WTC11 (cell line): ENCODE measurements at regions of chr20 and their contacts with region 1.

Region 1: GRCh38 chr20:45293041-45294002 is 13.3 kb upstream of the RBPJL start:
- DNase-seq: peak; percentile 95
- ATAC-seq: peak; percentile 87
- H3K4me3 Mint-ChIP-seq: peak overlapping the region; percentile 71
- H3K27ac Mint-ChIP-seq: no peak overlapping the region
- H3K4me1 Mint-ChIP-seq: peaks cover 7% of the 10 kb centered on the region; the same call in 1 of the 2 replicates
- H3K27me3 Mint-ChIP-seq: peaks cover 66% of the 10 kb centered on the region
- CTCF ChIP-seq: peak; percentile 95

Region 2: DNA sequence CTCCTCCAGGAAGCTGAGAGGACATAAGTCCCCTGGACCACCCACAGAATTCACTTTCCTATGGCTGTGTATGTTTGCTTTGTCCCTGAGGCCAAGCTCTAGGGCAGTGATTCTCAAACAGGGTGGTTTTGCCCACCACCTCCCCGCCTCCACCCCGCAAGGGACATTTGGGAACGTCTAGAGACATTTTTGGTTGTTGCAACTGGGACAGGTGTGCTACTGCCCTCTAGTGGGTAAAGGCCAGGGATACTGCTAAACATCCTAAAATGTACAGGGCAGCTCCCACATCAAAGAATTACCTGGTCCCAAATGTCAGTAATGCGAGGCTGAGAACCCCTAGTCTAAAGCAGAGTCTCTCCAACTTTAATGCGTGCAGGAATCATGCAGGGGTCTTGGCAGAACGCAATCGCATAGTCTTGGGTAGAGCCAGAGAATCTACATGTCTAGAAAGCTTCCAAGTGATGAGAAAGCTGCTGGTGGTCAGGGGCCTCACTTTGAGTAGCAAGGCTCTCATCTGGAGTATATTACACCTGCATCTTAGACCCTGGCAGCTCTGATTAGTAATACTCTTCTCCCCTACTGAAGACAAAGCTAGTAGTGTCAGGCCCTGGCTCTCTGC is 197.5 kb before region 1 on chr20:
- CTCF ChIA-PET with region 1: interaction called, 18 read pairs
- POLR2A ChIA-PET with region 1: no interaction called
- DNase-seq: peak; percentile 70
- ATAC-seq: peak; percentile 50
- H3K4me3 Mint-ChIP-seq: no peak overlapping the region
- H3K27ac Mint-ChIP-seq: no peak overlapping the region
- H3K4me1 Mint-ChIP-seq: peaks cover 12% of the 10 kb centered on the region
- H3K27me3 Mint-ChIP-seq: peaks cover 48% of the 10 kb centered on the region
- CTCF ChIP-seq: peak; percentile 66; the same call in 1 of the 2 replicates

Region 3: DNA sequence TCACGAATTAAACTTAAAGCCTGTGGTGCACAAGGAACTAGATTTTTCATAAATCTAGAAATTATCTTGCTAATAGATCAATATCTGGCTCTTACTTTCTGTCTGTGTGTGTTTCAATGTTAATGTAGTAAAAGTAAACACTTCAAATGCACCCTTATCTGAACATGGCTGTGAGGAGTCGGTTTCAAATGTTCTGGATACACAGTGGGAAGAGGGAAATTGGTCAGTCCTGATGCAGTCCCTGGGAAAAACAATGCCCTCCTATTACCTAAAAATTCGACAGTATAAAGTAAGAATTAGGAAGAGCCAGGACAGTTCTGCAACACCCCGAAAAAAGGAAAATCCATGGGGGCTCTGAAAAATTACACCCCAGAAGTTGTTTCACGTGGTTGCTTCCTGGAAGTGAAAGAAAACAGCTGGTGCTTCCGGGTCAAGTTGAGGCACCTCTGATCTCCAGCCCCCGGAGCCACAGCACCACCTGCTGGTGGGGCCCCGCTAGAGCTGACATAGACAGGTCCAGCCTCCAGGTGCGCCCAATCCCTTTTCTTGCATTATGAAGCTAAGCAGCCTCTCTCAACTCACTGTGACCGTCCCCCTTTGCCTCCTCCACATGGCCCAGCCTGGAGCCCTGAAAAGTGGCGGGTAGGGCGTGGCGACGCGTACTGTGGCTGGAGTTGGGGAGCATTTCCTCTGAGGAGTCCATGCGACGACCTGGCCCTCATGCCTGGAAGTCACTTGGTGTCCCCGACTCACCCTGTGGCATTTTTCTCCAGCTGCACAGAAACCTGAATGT is 63.9 kb before region 1 on chr20:
- CTCF ChIA-PET with region 1: interaction called, 30 read pairs
- POLR2A ChIA-PET with region 1: no interaction called
- DNase-seq: peak; percentile 90
- ATAC-seq: peak; percentile 96
- H3K4me3 Mint-ChIP-seq: no peak overlapping the region
- H3K27ac Mint-ChIP-seq: no peak overlapping the region
- H3K4me1 Mint-ChIP-seq: no peaks in the 10 kb centered on the region
- H3K27me3 Mint-ChIP-seq: peaks cover 53% of the 10 kb centered on the region
- CTCF ChIP-seq: peak; percentile 85

Region 4: GRCh38 chr20:45306431-45306982 is 13.2 kb after region 1 on chr20 and contains the start of gene RBPJL:
- CTCF ChIA-PET with region 1: interaction called, 154 read pairs
- POLR2A ChIA-PET with region 1: interaction called, 4 read pairs
- DNase-seq: peak; percentile 79
- ATAC-seq: peak; percentile 8; the same call in 1 of the 2 replicates
- H3K4me3 Mint-ChIP-seq: 0 out of 2 replicates have a peak within 1 kb of the TSS, but pooled peaks have one; percentile 22
- H3K27ac Mint-ChIP-seq: no peak within 1 kb of the TSS
- H3K4me1 Mint-ChIP-seq: peaks cover 22% of the 10 kb centered on the region
- H3K27me3 Mint-ChIP-seq: peaks cover 30% of the 10 kb centered on the region
- CTCF ChIP-seq: peak; percentile 99
- total RNA-seq, gene RBPJL: 0.78 to 0.85 TPM (median 0.80 TPM) in 3 replicates

Region 5: GRCh38 chr20:45347936-45348778 is 54.8 kb after region 1 on chr20 and contains the start of gene SDC4:
- CTCF ChIA-PET with region 1: interaction called, 16 read pairs
- POLR2A ChIA-PET with region 1: no interaction called
- DNase-seq: peak; percentile 68
- ATAC-seq: peak; percentile 63
- H3K4me3 Mint-ChIP-seq: peak within 1 kb of the TSS; percentile 89
- H3K27ac Mint-ChIP-seq: peak within 1 kb of the TSS; percentile 19
- H3K4me1 Mint-ChIP-seq: peaks cover 45% of the 10 kb centered on the region
- H3K27me3 Mint-ChIP-seq: no peaks in the 10 kb centered on the region
- CTCF ChIP-seq: no peak
- total RNA-seq, gene SDC4: 64.0 to 69.6 TPM (median 69.5 TPM) in 3 replicates

Region 6: GRCh38 chr20:45450097-45450818 is 156.9 kb after region 1 on chr20:
- CTCF ChIA-PET with region 1: interaction called, 10 read pairs
- POLR2A ChIA-PET with region 1: no interaction called
- DNase-seq: no peak
- ATAC-seq: peak; percentile 59
- H3K4me3 Mint-ChIP-seq: no peak overlapping the region
- H3K27ac Mint-ChIP-seq: no peak overlapping the region
- H3K4me1 Mint-ChIP-seq: peaks cover 3% of the 10 kb centered on the region; the same call in 1 of the 2 replicates
- H3K27me3 Mint-ChIP-seq: peaks cover 3% of the 10 kb centered on the region; the same call in 1 of the 2 replicates
- CTCF ChIP-seq: peak; percentile 70